ENCODE measurements at regions of chr1 and their contacts with region 1.

Region 1: GRCh38 chr1:197915862-197916499 is 1.2 kb upstream of the LHX9 start:
- DNase-seq: peak; percentile 76 to 81
- H3K4me3 ChIP-seq: peak overlapping the region; percentile 24
- H3K4me3 Mint-ChIP-seq: peak overlapping the region; percentile 81
- H3K27ac Mint-ChIP-seq: no peak overlapping the region
- H3K4me1 ChIP-seq: peaks cover 18% of the 10 kb centered on the region; the same call in 1 of the 2 replicates
- H3K4me1 Mint-ChIP-seq: peaks cover 25% of the 10 kb centered on the region
- H3K27me3 ChIP-seq: peaks cover 2% of the 10 kb centered on the region; the same call in 1 of the 2 replicates
- H3K27me3 Mint-ChIP-seq: peaks cover 40% of the 10 kb centered on the region
- CTCF ChIP-seq: peak; percentile 62 to 81

Region 2: GRCh38 chr1:197521118-197521739 is 394.8 kb before region 1 on chr1:
- CTCF ChIA-PET with region 1: no interaction called
- POLR2A ChIA-PET with region 1: no interaction called
- intact Hi-C with region 1: loop called (anchors 2 kb)
- DNase-seq: peak in 1 of 2 experiments; percentile 47
- H3K4me3 ChIP-seq: no peak overlapping the region
- H3K4me3 Mint-ChIP-seq: no peak overlapping the region
- H3K27ac Mint-ChIP-seq: no peak overlapping the region
- H3K4me1 ChIP-seq: no peaks in the 10 kb centered on the region
- H3K4me1 Mint-ChIP-seq: no peaks in the 10 kb centered on the region
- H3K27me3 ChIP-seq: no peaks in the 10 kb centered on the region
- H3K27me3 Mint-ChIP-seq: no peaks in the 10 kb centered on the region
- CTCF ChIP-seq: peak; percentile 64 to 70

Region 3: DNA sequence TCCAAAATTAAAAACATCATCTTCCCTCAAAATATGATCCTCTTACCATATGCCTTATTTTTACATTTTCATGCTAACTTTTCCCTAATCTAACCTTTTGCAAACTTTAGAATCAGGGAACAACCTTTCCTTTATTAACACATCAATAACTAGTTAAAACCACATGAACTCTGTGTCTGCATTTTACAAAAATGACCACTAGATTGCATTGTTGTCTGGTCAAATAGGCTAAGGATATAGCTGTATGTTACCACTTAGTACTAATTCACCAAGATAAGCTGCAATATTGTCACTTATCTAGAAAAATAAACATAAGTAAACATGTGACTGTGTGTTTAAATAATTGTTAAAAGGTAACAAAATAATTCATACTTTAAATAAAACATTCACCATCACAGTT is 223.0 kb before region 1 on chr1:
- CTCF ChIA-PET with region 1: interaction called, 16 read pairs
- POLR2A ChIA-PET with region 1: no interaction called
- intact Hi-C with region 1: loop called (anchors 1 kb)
- DNase-seq: no peak
- H3K4me3 ChIP-seq: no peak overlapping the region
- H3K4me3 Mint-ChIP-seq: no peak overlapping the region
- H3K27ac Mint-ChIP-seq: no peak overlapping the region
- H3K4me1 ChIP-seq: no peaks in the 10 kb centered on the region
- H3K4me1 Mint-ChIP-seq: no peaks in the 10 kb centered on the region
- H3K27me3 ChIP-seq: no peaks in the 10 kb centered on the region
- H3K27me3 Mint-ChIP-seq: no peaks in the 10 kb centered on the region
- CTCF ChIP-seq: peak in 1 of 2 experiments; percentile 24

Region 4: GRCh38 chr1:197775282-197776262 is 140.4 kb before region 1 on chr1 and contains the start of gene DENND1B:
- CTCF ChIA-PET with region 1: no interaction called
- POLR2A ChIA-PET with region 1: no interaction called
- intact Hi-C with region 1: loop called (anchors 5 kb)
- DNase-seq: peak; percentile 88 to 91
- H3K4me3 ChIP-seq: peak within 1 kb of the TSS; percentile 66
- H3K4me3 Mint-ChIP-seq: peak within 1 kb of the TSS; percentile 83
- H3K27ac Mint-ChIP-seq: peak within 1 kb of the TSS; percentile 80
- H3K4me1 ChIP-seq: 0 out of 2 replicates have a peak, but pooled peaks cover 17% of the 10 kb centered on the region
- H3K4me1 Mint-ChIP-seq: peaks cover 7% of the 10 kb centered on the region
- H3K27me3 ChIP-seq: no peaks in the 10 kb centered on the region
- H3K27me3 Mint-ChIP-seq: no peaks in the 10 kb centered on the region
- CTCF ChIP-seq: peak in 1 of 2 experiments; percentile 28
- total RNA-seq, gene DENND1B: 9.4 and 9.6 TPM in 2 replicates

Region 5: GRCh38 chr1:197905699-197906351 is 10.2 kb before region 1 on chr1:
- CTCF ChIA-PET with region 1: interaction called, 4 read pairs
- POLR2A ChIA-PET with region 1: interaction called, 12 read pairs
- intact Hi-C with region 1: no loop called
- DNase-seq: no peak
- H3K4me3 ChIP-seq: no peak overlapping the region
- H3K4me3 Mint-ChIP-seq: no peak overlapping the region
- H3K27ac Mint-ChIP-seq: no peak overlapping the region
- H3K4me1 ChIP-seq: peaks cover 4% of the 10 kb centered on the region; the same call in 1 of the 2 replicates
- H3K4me1 Mint-ChIP-seq: peaks cover 14% of the 10 kb centered on the region
- H3K27me3 ChIP-seq: no peaks in the 10 kb centered on the region
- H3K27me3 Mint-ChIP-seq: peaks cover 15% of the 10 kb centered on the region
- CTCF ChIP-seq: no peak

Region 6: GRCh38 chr1:197933647-197934046 is 17.7 kb after region 1 on chr1:
- CTCF ChIA-PET with region 1: no interaction called
- POLR2A ChIA-PET with region 1: interaction called, 15 read pairs
- intact Hi-C with region 1: no loop called
- DNase-seq: no peak
- H3K4me3 ChIP-seq: no peak overlapping the region
- H3K4me3 Mint-ChIP-seq: no peak overlapping the region
- H3K27ac Mint-ChIP-seq: no peak overlapping the region
- H3K4me1 ChIP-seq: no peaks in the 10 kb centered on the region
- H3K4me1 Mint-ChIP-seq: no peaks in the 10 kb centered on the region
- H3K27me3 ChIP-seq: no peaks in the 10 kb centered on the region
- H3K27me3 Mint-ChIP-seq: peaks cover 12% of the 10 kb centered on the region
- CTCF ChIP-seq: no peak

Region 7: DNA sequence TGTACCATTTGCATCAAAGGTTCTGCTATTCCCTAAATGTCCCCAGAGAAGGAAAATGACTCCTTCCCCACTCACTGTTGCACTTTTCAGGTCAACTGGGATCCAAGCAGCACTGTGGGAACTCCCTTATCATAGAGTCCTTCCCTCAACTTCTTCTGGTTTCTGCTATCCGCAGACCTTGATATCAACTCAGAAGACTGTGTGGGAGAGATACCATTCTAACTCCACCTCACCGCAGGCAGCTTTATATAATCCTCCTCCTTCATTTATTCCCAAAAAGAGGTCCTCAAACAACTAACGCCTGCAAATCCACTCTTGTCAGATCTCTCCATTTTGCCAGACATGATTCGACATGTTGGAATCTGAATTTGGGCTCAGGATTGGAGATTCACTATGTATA is 28.5 kb after region 1 on chr1:
- CTCF ChIA-PET with region 1: no interaction called
- POLR2A ChIA-PET with region 1: no interaction called
- intact Hi-C with region 1: no loop called
- DNase-seq: no peak
- H3K4me3 ChIP-seq: no peak overlapping the region
- H3K4me3 Mint-ChIP-seq: no peak overlapping the region
- H3K27ac Mint-ChIP-seq: no peak overlapping the region
- H3K4me1 ChIP-seq: no peaks in the 10 kb centered on the region
- H3K4me1 Mint-ChIP-seq: no peaks in the 10 kb centered on the region
- H3K27me3 ChIP-seq: no peaks in the 10 kb centered on the region
- H3K27me3 Mint-ChIP-seq: no peaks in the 10 kb centered on the region
- CTCF ChIP-seq: no peak

Region 8: GRCh38 chr1:198143797-198144196 is 227.8 kb after region 1 on chr1:
- CTCF ChIA-PET with region 1: no interaction called
- POLR2A ChIA-PET with region 1: no interaction called
- intact Hi-C with region 1: no loop called
- DNase-seq: no peak
- H3K4me3 ChIP-seq: no peak overlapping the region
- H3K4me3 Mint-ChIP-seq: no peak overlapping the region
- H3K27ac Mint-ChIP-seq: no peak overlapping the region
- H3K4me1 ChIP-seq: no peaks in the 10 kb centered on the region
- H3K4me1 Mint-ChIP-seq: no peaks in the 10 kb centered on the region
- H3K27me3 ChIP-seq: no peaks in the 10 kb centered on the region
- H3K27me3 Mint-ChIP-seq: no peaks in the 10 kb centered on the region
- CTCF ChIP-seq: no peak

Region 9: GRCh38 chr1:198681831-198682759 is 766.1 kb after region 1 on chr1:
- CTCF ChIA-PET with region 1: interaction called, 3 read pairs
- POLR2A ChIA-PET with region 1: no interaction called
- intact Hi-C with region 1: loop called (anchors 5 kb)
- DNase-seq: peak in 1 of 2 experiments; percentile 8
- H3K4me3 ChIP-seq: no peak overlapping the region
- H3K4me3 Mint-ChIP-seq: no peak overlapping the region
- H3K27ac Mint-ChIP-seq: no peak overlapping the region
- H3K4me1 ChIP-seq: no peaks in the 10 kb centered on the region
- H3K4me1 Mint-ChIP-seq: no peaks in the 10 kb centered on the region
- H3K27me3 ChIP-seq: no peaks in the 10 kb centered on the region
- H3K27me3 Mint-ChIP-seq: no peaks in the 10 kb centered on the region
- CTCF ChIP-seq: no peak